Activated T-helper 1 cell treated with anti-CD3 and anti-CD28 coated beads, Interleukin-12 subunit alpha, Interleukin-12 subunit beta, Interleukin-2, Interleukin-4 antibody, amounts not matched to agents 30 ng/mL and 10 ng/mL and 1 ng/mL, durations not matched to agents 14 hours and 24 hours and 36 hours (primary cell): ENCODE measurements at regions of chr10 and their contacts with region 1.

Region 1: GRCh38 chr10:126705951-126706565 is 35.6 kb upstream of the C10orf90 start:
- DNase-seq: no peak
- H3K4me3 Mint-ChIP-seq: no peak overlapping the region
- H3K27ac Mint-ChIP-seq: no peak overlapping the region
- H3K4me1 Mint-ChIP-seq: no peaks in the 10 kb centered on the region
- H3K27me3 Mint-ChIP-seq: no peaks in the 10 kb centered on the region

Region 2: DNA sequence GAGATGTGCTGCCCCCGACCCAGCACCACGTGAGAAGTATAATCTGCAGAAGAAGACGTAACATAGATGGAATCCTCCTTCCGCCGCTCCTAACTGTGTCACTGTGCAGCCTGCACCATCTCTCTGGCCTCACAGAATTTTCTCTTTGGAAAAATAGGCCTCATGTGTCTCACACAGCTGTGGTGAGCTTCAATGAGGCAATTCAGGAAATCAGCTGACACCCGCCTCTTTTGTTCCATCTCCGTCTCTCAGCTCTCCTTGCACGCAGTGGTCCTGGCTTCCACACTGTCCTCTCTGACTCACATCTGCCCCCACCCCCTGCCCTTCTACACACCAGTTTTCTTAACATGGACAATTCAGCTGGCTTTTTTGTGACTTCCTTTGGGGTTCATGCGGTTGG is 42.7 kb before region 1 on chr10:
- intact Hi-C with region 1: loop called (anchors 1 kb)
- DNase-seq: no peak
- H3K4me3 Mint-ChIP-seq: no peak overlapping the region
- H3K27ac Mint-ChIP-seq: no peak overlapping the region
- H3K4me1 Mint-ChIP-seq: no peaks in the 10 kb centered on the region
- H3K27me3 Mint-ChIP-seq: no peaks in the 10 kb centered on the region